Activated T-helper 2 cell treated with anti-CD3 and anti-CD28 coated beads, Interferon-gamma antibody, Interleukin-2, Interleukin-4, amounts not matched to agents 10 μg/mL and 5 μg/mL and 100 μg/mL, durations not matched to agents 14 hours and 24 hours and 36 hours (primary cell): ENCODE measurements at regions of chr2 and their contacts with region 1.

Region 1: GRCh38 chr2:67397143-67397986 is at the start of gene ETAA1:
- DNase-seq: peak; percentile 90
- H3K4me3 Mint-ChIP-seq: peak within 1 kb of the TSS; percentile 94
- H3K27ac Mint-ChIP-seq: peak within 1 kb of the TSS; percentile 98
- H3K4me1 Mint-ChIP-seq: peaks cover 11% of the 10 kb centered on the region
- H3K27me3 Mint-ChIP-seq: no peaks in the 10 kb centered on the region
- total RNA-seq, gene ETAA1: 11.1 and 12.0 TPM in 2 replicates

Region 2: DNA sequence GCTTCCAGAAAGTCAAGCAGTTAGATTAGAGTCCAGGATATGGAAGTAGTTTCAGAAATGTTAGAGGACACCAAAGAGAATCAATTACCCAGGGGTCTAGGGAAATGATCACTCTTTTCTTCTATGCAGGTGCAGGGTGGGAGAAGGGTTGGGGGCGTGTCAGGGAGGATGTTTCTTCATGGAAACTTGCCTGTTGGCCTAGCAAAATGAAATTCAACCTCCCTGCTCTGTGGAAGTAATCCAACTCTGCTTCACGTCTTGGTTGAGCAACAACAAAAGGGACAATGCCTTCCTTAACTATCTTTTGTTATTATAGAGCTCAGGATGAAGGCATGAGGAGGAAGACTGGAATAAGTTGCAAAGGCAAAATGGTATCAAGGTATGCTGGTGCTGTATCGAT is 211.0 kb before region 1 on chr2:
- intact Hi-C with region 1: no loop called
- DNase-seq: no peak
- H3K4me3 Mint-ChIP-seq: no peak overlapping the region
- H3K27ac Mint-ChIP-seq: no peak overlapping the region
- H3K4me1 Mint-ChIP-seq: no peaks in the 10 kb centered on the region
- H3K27me3 Mint-ChIP-seq: no peaks in the 10 kb centered on the region

Region 3: GRCh38 chr2:67322353-67323001 is 74.9 kb before region 1 on chr2:
- intact Hi-C with region 1: no loop called
- DNase-seq: no peak
- H3K4me3 Mint-ChIP-seq: no peak overlapping the region
- H3K27ac Mint-ChIP-seq: no peak overlapping the region
- H3K4me1 Mint-ChIP-seq: no peaks in the 10 kb centered on the region
- H3K27me3 Mint-ChIP-seq: peaks cover 2% of the 10 kb centered on the region

Region 4: GRCh38 chr2:67625690-67626475 is 228.5 kb after region 1 on chr2:
- intact Hi-C with region 1: no loop called
- DNase-seq: no peak
- H3K4me3 Mint-ChIP-seq: no peak overlapping the region
- H3K27ac Mint-ChIP-seq: no peak overlapping the region
- H3K4me1 Mint-ChIP-seq: no peaks in the 10 kb centered on the region
- H3K27me3 Mint-ChIP-seq: no peaks in the 10 kb centered on the region

Region 5: DNA sequence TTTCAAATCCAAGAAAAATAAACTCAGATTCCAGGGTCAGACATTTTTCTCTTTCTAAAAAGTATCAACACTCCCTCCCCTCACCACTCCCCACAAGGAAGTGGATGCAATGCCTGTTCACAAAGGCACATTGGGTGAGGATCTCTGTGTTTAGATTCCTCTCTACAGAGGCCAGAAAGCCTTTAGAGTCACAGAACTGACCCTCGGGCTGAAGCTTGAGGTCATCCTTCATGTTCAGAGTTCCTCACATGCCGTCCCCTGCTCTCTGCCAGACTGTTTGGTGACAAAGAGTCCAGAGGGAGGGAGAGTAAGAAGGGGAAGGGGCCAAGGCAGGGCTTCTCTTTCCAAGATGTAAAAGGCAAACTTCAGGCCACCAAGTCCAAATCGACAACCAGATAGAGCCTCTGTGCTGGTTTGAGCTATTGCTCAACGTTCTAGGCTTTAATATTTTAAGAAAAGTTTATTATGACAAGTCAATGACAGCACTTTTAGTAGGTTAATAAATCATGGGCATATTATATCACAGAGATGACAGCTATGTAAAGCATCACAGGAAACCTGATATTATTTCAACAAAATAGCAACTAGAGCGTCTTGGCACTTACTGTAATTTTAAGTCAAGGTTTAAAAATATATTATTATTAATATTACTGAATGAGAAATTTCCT is 269.2 kb after region 1 on chr2:
- intact Hi-C with region 1: no loop called
- DNase-seq: no peak
- H3K4me3 Mint-ChIP-seq: no peak overlapping the region
- H3K27ac Mint-ChIP-seq: no peak overlapping the region
- H3K4me1 Mint-ChIP-seq: no peaks in the 10 kb centered on the region
- H3K27me3 Mint-ChIP-seq: no peaks in the 10 kb centered on the region

Region 6: DNA sequence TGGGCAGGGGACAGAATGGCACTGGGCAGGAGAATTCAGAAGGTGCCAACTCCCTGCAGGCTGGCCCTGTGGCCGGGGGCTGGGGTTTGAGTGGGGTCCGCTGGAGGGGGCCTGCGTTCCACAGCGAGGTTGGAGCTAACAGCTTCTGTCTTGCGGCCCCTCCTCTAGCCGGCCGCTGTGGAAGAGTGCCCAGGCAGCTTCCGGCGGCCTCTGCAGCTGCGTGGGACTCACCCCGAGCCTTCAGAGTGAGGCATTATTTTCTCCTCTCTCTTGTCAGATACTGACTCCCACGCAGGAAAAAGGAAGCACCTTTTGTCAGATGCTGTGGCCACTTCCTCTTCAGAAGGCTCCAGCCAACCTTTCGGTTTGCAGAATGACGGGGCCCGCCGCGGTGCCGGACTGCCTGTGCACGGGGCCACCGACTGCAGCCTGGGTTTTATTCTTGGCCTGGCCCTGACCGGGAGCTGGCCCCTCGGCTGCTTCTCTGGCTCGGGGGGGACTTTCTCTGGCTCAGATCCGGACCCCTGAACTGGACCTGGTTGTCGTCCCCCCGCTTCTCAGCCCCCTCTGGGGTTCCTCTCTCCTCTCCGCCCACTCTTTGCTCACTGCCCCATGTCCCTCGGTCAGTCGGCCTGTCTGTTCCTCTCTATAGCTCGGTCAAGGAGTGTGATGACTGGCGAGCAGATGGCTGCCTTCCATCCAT is 1377.4 kb after region 1 on chr2:
- intact Hi-C with region 1: loop called (anchors 5 kb)
- DNase-seq: peak; percentile 52
- H3K4me3 Mint-ChIP-seq: peak overlapping the region; percentile 77
- H3K27ac Mint-ChIP-seq: peak overlapping the region; percentile 86
- H3K4me1 Mint-ChIP-seq: peaks cover 83% of the 10 kb centered on the region
- H3K27me3 Mint-ChIP-seq: no peaks in the 10 kb centered on the region